ENCODE measurements at regions of chr3 and their contacts with region 1.

Region 1: GRCh38 chr3:23999012-23999641 is 54.0 kb downstream of the NR1D2 start:
- DNase-seq: peak; percentile 86
- ATAC-seq: peak; percentile 55
- H3K4me3 ChIP-seq: no peak overlapping the region
- H3K27ac ChIP-seq: no peak overlapping the region
- H3K4me1 ChIP-seq: no peaks in the 10 kb centered on the region
- H3K27me3 ChIP-seq: no peaks in the 10 kb centered on the region
- CTCF ChIP-seq: peak; percentile 98

Region 2: GRCh38 chr3:23484386-23484785 is 514.7 kb before region 1 on chr3:
- CTCF ChIA-PET with region 1: no interaction called
- POLR2A ChIA-PET with region 1: no interaction called
- intact Hi-C with region 1: no loop called
- DNase-seq: no peak
- ATAC-seq: no peak
- H3K4me3 ChIP-seq: no peak overlapping the region
- H3K27ac ChIP-seq: no peak overlapping the region
- H3K4me1 ChIP-seq: peaks cover 1% of the 10 kb centered on the region; the same call in 1 of the 2 replicates
- H3K27me3 ChIP-seq: no peaks in the 10 kb centered on the region
- CTCF ChIP-seq: no peak

Region 3: DNA sequence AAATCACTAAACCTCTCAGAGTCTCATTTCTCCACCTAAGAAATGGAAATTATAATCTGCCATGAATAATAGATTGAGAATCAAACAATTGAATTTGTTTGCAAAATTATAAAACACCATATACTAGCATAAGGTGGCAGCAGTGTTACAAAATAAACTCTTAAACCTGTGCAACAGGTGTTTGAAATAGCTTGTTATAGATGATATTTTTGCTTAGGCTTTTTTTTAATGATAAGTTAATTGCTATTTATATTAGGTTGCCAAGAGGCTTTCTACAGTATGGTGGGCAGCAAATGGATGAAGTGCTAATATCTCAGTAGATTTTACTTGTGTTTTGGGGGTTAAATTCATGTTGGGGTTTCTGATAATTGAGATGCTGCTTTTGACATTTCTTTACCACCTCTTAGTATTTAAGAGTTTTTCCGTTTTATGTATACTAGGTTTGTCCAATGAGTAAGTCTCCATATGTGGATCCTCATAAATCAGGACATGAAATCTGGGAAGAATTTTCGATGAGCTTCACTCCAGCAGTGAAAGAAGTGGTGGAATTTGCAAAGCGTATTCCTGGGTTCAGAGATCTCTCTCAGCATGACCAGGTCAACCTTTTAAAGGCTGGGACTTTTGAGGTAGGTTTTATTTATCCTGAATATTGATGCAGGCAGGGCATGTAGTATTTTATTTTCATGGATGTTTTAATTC is 34.4 kb before region 1 on chr3:
- CTCF ChIA-PET with region 1: interaction called, 16 read pairs
- POLR2A ChIA-PET with region 1: no interaction called
- intact Hi-C with region 1: no loop called
- DNase-seq: no peak
- ATAC-seq: no peak
- H3K4me3 ChIP-seq: no peak overlapping the region
- H3K27ac ChIP-seq: no peak overlapping the region
- H3K4me1 ChIP-seq: peaks cover 45% of the 10 kb centered on the region
- H3K27me3 ChIP-seq: no peaks in the 10 kb centered on the region
- CTCF ChIP-seq: no peak

Region 4: DNA sequence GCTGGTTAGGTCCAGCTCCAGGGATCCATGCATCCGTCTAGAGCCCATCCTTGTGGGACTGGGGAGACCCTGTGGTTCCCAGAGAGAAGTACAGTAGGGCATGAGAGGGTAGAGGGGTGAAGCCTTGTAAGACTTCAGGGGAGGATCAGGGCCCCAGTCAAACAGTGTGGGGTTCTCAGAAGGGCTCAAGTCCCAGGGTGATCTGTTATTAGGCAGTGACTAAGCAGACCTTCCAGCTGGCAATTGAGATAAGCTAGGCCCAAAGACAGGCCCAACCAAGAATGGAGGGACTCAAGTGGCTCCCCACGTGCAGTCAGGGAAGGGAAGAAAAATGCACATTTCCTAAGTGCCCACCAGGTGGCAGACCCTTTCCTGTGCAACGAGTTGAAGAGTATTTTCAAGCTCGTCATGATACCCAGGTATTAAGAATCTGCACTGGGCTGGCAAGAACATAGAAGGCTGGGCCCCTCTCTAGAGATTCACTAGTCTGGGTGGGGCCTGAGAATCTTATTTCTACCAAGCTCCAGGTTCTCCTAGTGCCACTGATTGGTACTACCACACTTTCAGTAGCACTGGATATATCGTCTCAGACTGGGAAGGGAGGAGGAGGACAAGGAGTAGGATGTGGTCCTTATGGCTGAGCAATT is 186.7 kb after region 1 on chr3:
- CTCF ChIA-PET with region 1: no interaction called
- POLR2A ChIA-PET with region 1: no interaction called
- intact Hi-C with region 1: loop called (anchors 5 kb)
- DNase-seq: peak; percentile 81
- ATAC-seq: peak; percentile 91
- H3K4me3 ChIP-seq: no peak overlapping the region
- H3K27ac ChIP-seq: no peak overlapping the region
- H3K4me1 ChIP-seq: no peaks in the 10 kb centered on the region
- H3K27me3 ChIP-seq: no peaks in the 10 kb centered on the region
- CTCF ChIP-seq: peak; percentile 85

Region 5: GRCh38 chr3:24598695-24599470 is 599.8 kb after region 1 on chr3:
- CTCF ChIA-PET with region 1: no interaction called
- POLR2A ChIA-PET with region 1: no interaction called
- intact Hi-C with region 1: loop called (anchors 10 kb)
- DNase-seq: peak; percentile 88
- ATAC-seq: peak; percentile 45
- H3K4me3 ChIP-seq: peak overlapping the region; percentile 45
- H3K27ac ChIP-seq: peak overlapping the region; percentile 50
- H3K4me1 ChIP-seq: peaks cover 41% of the 10 kb centered on the region
- H3K27me3 ChIP-seq: no peaks in the 10 kb centered on the region
- CTCF ChIP-seq: no peak